Activated CD4-positive, alpha-beta T cell treated with anti-CD3 and anti-CD28 coated beads for 36 hours (primary cell): ENCODE measurements at regions of chr3 and their contacts with region 1.

Region 1: DNA sequence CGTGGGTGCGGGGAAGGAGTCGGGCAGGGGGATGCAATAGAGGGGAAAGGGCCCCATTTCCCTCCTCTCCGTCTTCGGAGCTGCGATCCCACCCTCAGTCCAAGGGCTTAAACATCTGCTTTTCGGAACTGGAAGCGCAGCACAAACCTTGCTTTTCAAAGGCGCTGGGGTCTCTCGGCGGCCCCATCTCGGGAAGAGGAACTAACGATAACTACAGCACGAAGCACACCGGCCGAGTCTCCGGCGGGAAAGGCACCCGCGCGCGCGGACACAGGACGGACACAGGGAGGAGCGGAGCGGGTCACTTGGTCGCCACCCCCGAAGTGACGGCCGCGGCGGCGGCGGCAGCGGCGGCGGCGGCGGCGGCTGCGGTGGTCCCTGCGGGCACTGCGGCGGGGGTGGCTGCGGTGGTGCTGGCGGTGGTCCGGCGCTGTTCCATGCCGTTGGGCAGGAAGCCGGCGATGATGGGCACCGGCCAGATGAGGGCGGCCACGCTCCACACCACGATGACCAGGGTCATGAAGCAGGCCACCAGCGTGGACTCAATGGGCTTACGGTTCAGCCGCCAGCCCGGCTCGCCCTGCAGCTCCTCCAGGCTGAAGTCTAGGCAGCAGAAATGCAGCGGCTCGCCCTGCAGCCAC is 1.1 kb downstream of the TMEM158 start:
- DNase-seq: peak; percentile 60
- ATAC-seq: no peak
- H3K4me3 Mint-ChIP-seq: peak overlapping the region; percentile 73
- H3K27ac Mint-ChIP-seq: no peak overlapping the region
- H3K4me1 Mint-ChIP-seq: peaks cover 13% of the 10 kb centered on the region
- H3K27me3 Mint-ChIP-seq: peaks cover 62% of the 10 kb centered on the region

Region 2: GRCh38 chr3:45210308-45211041 is 14.5 kb before region 1 on chr3:
- CTCF ChIA-PET with region 1: interaction called, 11 read pairs
- POLR2A ChIA-PET with region 1: no interaction called
- intact Hi-C with region 1: no loop called
- DNase-seq: peak; percentile 90
- ATAC-seq: peak; percentile 91
- H3K4me3 Mint-ChIP-seq: no peak overlapping the region
- H3K27ac Mint-ChIP-seq: no peak overlapping the region
- H3K4me1 Mint-ChIP-seq: peaks cover 28% of the 10 kb centered on the region
- H3K27me3 Mint-ChIP-seq: peaks cover 10% of the 10 kb centered on the region

Region 3: GRCh38 chr3:45387636-45388348 is 162.8 kb after region 1 on chr3:
- CTCF ChIA-PET with region 1: no interaction called
- POLR2A ChIA-PET with region 1: no interaction called
- intact Hi-C with region 1: loop called in 1 of 2 experiments (anchors 1 kb)
- DNase-seq: no peak
- ATAC-seq: peak; percentile 8
- H3K4me3 Mint-ChIP-seq: peak overlapping the region; percentile 85
- H3K27ac Mint-ChIP-seq: peak overlapping the region; percentile 51
- H3K4me1 Mint-ChIP-seq: peaks cover 13% of the 10 kb centered on the region
- H3K27me3 Mint-ChIP-seq: peaks cover 1% of the 10 kb centered on the region